ENCODE measurements at regions of chr6 and their contacts with region 1.

Region 1: GRCh38 chr6:106444777-106445507 is 84.4 kb downstream of the CRYBG1 start:
- DNase-seq: peak; percentile 54
- H3K4me3 ChIP-seq: no peak overlapping the region
- H3K27ac ChIP-seq: no peak overlapping the region
- H3K4me1 ChIP-seq: no peaks in the 10 kb centered on the region
- H3K27me3 ChIP-seq: no peaks in the 10 kb centered on the region
- CTCF ChIP-seq: peak; percentile 71

Region 2: DNA sequence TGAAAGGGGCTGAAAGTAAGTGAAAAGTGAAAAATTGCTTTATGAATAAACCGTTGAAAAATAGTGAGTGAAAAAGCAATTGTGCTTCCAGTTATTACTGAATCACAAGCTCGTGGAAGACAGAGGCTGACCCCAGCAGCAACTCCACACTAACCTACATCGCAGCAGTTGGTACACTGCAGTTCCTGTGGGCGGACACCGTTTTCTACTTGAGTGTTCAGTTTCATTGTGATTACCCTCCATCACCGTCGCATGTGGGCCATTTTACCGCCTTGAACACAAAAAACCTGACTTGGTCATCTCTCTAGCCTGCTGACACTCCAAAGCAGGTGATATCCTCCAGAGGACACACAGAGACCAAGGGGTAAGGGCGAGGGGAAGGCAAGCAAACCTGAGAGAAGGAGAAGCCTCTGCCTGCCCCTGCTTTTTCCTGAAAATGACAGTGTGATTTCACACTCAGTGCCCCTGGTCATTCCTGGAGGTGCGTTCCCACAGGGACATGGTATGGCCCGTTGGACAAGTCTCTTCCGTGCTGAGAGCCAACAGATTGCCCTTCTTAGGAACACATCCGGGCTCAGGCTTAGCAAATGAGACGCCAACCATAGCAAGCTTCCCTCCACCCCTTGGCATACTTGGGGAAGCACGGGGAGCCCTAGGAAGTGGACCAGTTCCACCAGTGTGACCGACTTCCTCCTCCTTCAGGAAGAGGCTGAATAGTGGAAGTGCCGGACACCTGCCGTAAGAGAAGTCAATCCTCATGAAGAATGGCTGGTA is 330.3 kb before region 1 on chr6:
- intact Hi-C with region 1: no loop called
- DNase-seq: no peak
- H3K4me3 ChIP-seq: no peak overlapping the region
- H3K27ac ChIP-seq: no peak overlapping the region
- H3K4me1 ChIP-seq: peaks cover under 1% of the 10 kb centered on the region
- H3K27me3 ChIP-seq: no peaks in the 10 kb centered on the region
- CTCF ChIP-seq: no peak

Region 3: GRCh38 chr6:106560996-106561685 is 116.2 kb after region 1 on chr6:
- intact Hi-C with region 1: loop called (anchors 2 kb)
- DNase-seq: no peak
- H3K4me3 ChIP-seq: no peak overlapping the region
- H3K27ac ChIP-seq: no peak overlapping the region
- H3K4me1 ChIP-seq: no peaks in the 10 kb centered on the region
- H3K27me3 ChIP-seq: no peaks in the 10 kb centered on the region
- CTCF ChIP-seq: no peak

Measured in colonic mucosa (tissue), 4 donors.